Activated CD4-positive, alpha-beta T cell treated with anti-CD3 and anti-CD28 coated beads, Interleukin-2, amount 10 ng/mL, durations not matched to agents 24 days and 14 days (primary cell): ENCODE measurements at regions of chr9 and their contacts with region 1.

Region 1: GRCh38 chr9:113511856-113512761 is 48.6 kb downstream of the RGS3 start:
- DNase-seq: peak; percentile 89
- H3K4me3 Mint-ChIP-seq: peak overlapping the region; percentile 74
- H3K27ac Mint-ChIP-seq: peak overlapping the region; percentile 96
- H3K4me1 Mint-ChIP-seq: peaks cover 64% of the 10 kb centered on the region
- H3K27me3 Mint-ChIP-seq: no peaks in the 10 kb centered on the region

Region 2: GRCh38 chr9:113349445-113350094 is 162.5 kb before region 1 on chr9 and contains the start of gene BSPRY:
- intact Hi-C with region 1: loop called (anchors 2 kb)
- DNase-seq: peak; percentile 87
- H3K4me3 Mint-ChIP-seq: peak within 1 kb of the TSS; percentile 89
- H3K27ac Mint-ChIP-seq: peak within 1 kb of the TSS; percentile 90
- H3K4me1 Mint-ChIP-seq: peaks cover 56% of the 10 kb centered on the region
- H3K27me3 Mint-ChIP-seq: no peaks in the 10 kb centered on the region
- total RNA-seq, gene BSPRY: 10.5 and 10.6 TPM in 2 replicates

Region 3: DNA sequence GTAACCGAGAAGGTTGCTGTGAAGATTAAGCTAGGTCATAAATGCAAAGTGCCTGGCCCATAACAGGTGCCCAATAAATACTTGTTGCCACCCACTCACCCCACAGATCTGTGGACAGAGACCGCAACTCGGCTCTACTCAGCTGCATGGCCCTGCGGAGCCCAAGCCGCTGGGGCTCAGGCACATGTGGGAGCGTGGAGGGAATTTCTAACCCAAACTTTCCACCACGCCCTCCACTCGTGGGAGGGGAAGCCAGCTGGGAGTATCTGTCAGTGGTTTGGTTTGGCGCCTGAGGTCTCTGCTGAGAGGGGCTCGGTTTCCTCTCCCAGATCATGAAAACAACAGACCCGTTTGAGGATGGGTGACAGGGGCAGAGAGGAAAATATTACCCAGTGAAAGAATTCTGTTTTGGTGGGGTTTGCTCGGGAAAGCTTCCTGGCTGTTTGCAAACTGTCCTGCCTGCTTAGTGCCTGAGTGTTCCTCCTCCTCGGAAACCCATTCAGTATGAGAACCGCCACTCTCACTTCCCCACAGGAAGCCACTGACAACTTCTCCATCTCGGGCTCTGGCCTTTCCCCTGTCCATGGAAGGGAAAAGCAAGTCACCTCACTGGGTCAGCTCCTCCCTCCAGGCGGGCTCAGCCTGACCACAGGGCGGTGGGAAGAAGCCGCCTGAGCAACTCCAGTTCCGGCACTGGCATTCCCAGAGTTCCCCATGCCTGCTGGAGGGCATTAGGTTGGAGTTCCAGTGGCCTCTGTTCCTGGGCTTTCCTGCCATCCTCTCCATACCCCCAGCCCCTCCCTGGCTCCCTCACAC is 11.5 kb after region 1 on chr9:
- intact Hi-C with region 1: loop called (anchors 1 kb)
- DNase-seq: peak; percentile 84
- H3K4me3 Mint-ChIP-seq: peak overlapping the region; percentile 79
- H3K27ac Mint-ChIP-seq: peak overlapping the region; percentile 81
- H3K4me1 Mint-ChIP-seq: peaks cover 72% of the 10 kb centered on the region
- H3K27me3 Mint-ChIP-seq: no peaks in the 10 kb centered on the region

Region 4: DNA sequence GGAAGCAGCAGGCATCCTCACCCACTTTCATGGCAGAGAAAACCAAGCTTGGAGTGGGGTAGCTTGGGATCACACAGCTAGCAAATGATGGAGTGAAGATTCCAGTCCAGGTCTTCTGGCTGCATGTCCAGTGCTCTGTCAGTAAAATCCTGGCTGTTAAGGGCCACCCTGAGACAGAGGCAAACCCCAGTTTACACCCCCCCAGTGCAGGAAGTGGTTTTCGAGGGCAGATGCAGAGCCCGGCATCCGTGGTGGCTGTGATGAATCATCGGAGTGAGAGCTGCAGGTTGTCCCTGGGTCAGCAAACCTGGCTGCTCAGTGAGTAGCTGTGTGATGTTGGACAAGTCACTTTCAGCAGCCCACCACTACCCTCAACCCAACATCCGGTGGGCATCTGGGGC is 66.8 kb after region 1 on chr9:
- intact Hi-C with region 1: loop called (anchors 1 kb)
- DNase-seq: peak; percentile 96
- H3K4me3 Mint-ChIP-seq: peak overlapping the region; percentile 80
- H3K27ac Mint-ChIP-seq: peak overlapping the region; percentile 93
- H3K4me1 Mint-ChIP-seq: peaks cover 77% of the 10 kb centered on the region
- H3K27me3 Mint-ChIP-seq: no peaks in the 10 kb centered on the region

Region 5: GRCh38 chr9:113657703-113658544 is 145.8 kb after region 1 on chr9:
- intact Hi-C with region 1: loop called (anchors 5 kb)
- DNase-seq: peak; percentile 94
- H3K4me3 Mint-ChIP-seq: no peak overlapping the region
- H3K27ac Mint-ChIP-seq: no peak overlapping the region
- H3K4me1 Mint-ChIP-seq: peaks cover 9% of the 10 kb centered on the region
- H3K27me3 Mint-ChIP-seq: peaks cover 22% of the 10 kb centered on the region